Activated B cell treated with CpG ODN at 0.5 μM for 24 hours (primary cell): ENCODE measurements at regions of chr19 and their contacts with region 1.

Region 1: DNA sequence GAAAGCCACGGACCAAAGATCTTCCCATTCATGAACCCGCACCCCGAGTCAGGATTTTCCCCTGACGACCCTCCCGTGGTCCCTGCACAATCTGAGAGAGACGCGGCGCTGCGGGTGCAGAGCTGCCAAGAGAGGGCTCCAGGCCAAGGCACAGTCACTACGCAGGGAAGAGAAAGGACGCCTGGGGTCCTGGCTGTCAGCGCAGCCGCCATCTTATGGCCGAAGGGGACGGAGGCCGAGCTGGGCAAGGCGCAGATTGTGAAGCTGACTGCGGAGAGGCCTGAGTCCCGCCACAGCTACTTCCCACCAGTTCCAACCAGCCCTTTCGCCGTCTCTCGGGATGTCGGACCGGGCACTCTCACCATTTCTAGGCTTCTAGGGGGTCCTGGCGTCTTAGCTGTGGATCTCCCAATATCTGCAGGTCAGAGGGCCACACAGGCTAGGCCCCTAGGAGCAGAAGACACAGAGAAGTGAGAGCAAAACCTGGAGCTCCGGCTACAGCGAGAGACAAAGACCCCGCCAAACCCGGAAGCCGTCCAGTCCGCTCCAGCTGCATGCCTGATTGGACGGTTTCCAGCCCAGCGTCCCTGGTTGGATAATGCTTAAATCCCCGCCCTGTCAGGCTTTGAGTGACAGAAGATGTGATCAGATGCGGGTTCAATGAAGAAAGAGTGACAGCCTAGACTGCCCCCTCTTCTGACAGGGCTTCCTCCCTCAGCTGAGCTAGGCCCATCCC is at the start of gene ZNF100:
- DNase-seq: peak; percentile 70
- ATAC-seq: peak; percentile 98
- H3K4me3 Mint-ChIP-seq: peak within 1 kb of the TSS; percentile 95
- H3K27ac Mint-ChIP-seq: peak within 1 kb of the TSS; percentile 88
- H3K4me1 Mint-ChIP-seq: peaks cover 18% of the 10 kb centered on the region
- H3K27me3 Mint-ChIP-seq: no peaks in the 10 kb centered on the region
- CTCF ChIP-seq: no peak
- total RNA-seq, gene ZNF100: 21.1 and 22.4 TPM in 2 replicates

Region 2: GRCh38 chr19:21358768-21359451 is 408.3 kb before region 1 on chr19 and contains the start of gene ZNF738:
- CTCF ChIA-PET with region 1: no interaction called
- POLR2A ChIA-PET with region 1: interaction called, 4 read pairs
- intact Hi-C with region 1: loop called (anchors 5 kb)
- DNase-seq: peak; percentile 70
- ATAC-seq: peak; percentile 96
- H3K4me3 Mint-ChIP-seq: peak within 1 kb of the TSS; percentile 100
- H3K27ac Mint-ChIP-seq: peak within 1 kb of the TSS; percentile 96
- H3K4me1 Mint-ChIP-seq: peaks cover 13% of the 10 kb centered on the region
- H3K27me3 Mint-ChIP-seq: no peaks in the 10 kb centered on the region
- CTCF ChIP-seq: no peak
- total RNA-seq, gene ZNF738: 18.7 and 22.2 TPM in 2 replicates

Region 3: GRCh38 chr19:21680671-21681070 is 86.6 kb before region 1 on chr19:
- CTCF ChIA-PET with region 1: no interaction called
- POLR2A ChIA-PET with region 1: no interaction called
- intact Hi-C with region 1: no loop called
- DNase-seq: no peak
- ATAC-seq: no peak
- H3K4me3 Mint-ChIP-seq: no peak overlapping the region
- H3K27ac Mint-ChIP-seq: no peak overlapping the region
- H3K4me1 Mint-ChIP-seq: no peaks in the 10 kb centered on the region
- H3K27me3 Mint-ChIP-seq: no peaks in the 10 kb centered on the region
- CTCF ChIP-seq: no peak

Region 4: DNA sequence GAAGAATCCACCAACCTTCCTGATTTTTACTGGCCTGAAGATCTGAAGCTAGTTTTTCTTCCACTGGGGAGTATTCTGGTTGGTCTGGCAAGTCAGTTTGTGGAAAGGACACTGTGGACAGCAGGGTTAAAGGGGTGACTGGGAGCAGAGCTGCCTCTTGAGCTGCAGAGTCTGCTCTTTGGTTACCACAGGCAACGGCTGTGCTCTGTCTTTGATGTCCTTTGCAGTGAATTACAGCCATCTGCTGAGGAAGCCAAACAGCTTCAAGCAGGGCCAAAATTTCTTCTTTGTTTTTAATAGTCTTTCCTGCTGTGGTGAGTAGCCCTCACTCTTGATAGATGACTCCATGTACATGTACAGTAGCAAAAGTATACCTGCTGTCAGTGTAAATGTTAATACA is 75.6 kb before region 1 on chr19:
- CTCF ChIA-PET with region 1: no interaction called
- POLR2A ChIA-PET with region 1: no interaction called
- intact Hi-C with region 1: no loop called
- DNase-seq: no peak
- ATAC-seq: no peak
- H3K4me3 Mint-ChIP-seq: no peak overlapping the region
- H3K27ac Mint-ChIP-seq: no peak overlapping the region
- H3K4me1 Mint-ChIP-seq: no peaks in the 10 kb centered on the region
- H3K27me3 Mint-ChIP-seq: no peaks in the 10 kb centered on the region
- CTCF ChIP-seq: no peak

Region 5: DNA sequence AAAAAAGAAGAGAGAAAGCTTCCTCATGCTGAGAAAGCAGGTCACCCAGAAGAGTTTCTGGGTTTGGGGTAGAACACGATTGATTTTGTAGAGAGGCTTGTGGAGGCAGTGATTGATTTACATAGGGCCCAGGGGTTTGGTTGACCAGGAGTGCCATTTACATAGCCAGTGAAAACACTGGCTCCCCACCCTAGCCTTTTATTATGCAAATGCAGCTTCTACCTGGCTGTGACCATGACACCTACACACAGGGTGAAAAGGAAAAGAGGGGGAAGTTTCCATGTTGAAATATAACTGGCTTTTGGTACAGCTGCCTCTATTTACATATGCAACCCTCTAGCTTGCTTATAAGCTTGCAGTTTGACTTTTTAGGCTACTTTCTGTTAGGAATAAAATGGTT is 61.8 kb before region 1 on chr19:
- CTCF ChIA-PET with region 1: no interaction called
- POLR2A ChIA-PET with region 1: no interaction called
- intact Hi-C with region 1: no loop called
- DNase-seq: no peak
- ATAC-seq: no peak
- H3K4me3 Mint-ChIP-seq: no peak overlapping the region
- H3K27ac Mint-ChIP-seq: no peak overlapping the region
- H3K4me1 Mint-ChIP-seq: no peaks in the 10 kb centered on the region
- H3K27me3 Mint-ChIP-seq: no peaks in the 10 kb centered on the region
- CTCF ChIP-seq: no peak

Region 6: GRCh38 chr19:21835810-21836444 is 68.7 kb after region 1 on chr19 and contains the start of gene ZNF43:
- CTCF ChIA-PET with region 1: no interaction called
- POLR2A ChIA-PET with region 1: interaction called, 44 read pairs
- intact Hi-C with region 1: loop called (anchors 1 kb)
- DNase-seq: peak; percentile 77
- ATAC-seq: peak; percentile 98
- H3K4me3 Mint-ChIP-seq: peak within 1 kb of the TSS; percentile 100
- H3K27ac Mint-ChIP-seq: peak within 1 kb of the TSS; percentile 100
- H3K4me1 Mint-ChIP-seq: peaks cover 38% of the 10 kb centered on the region
- H3K27me3 Mint-ChIP-seq: no peaks in the 10 kb centered on the region
- CTCF ChIP-seq: no peak
- total RNA-seq, gene ZNF43: 41.8 and 52.4 TPM in 2 replicates

Region 7: GRCh38 chr19:21851596-21852345 is 84.5 kb after region 1 on chr19:
- CTCF ChIA-PET with region 1: interaction called, 3 read pairs
- POLR2A ChIA-PET with region 1: interaction called, 13 read pairs
- intact Hi-C with region 1: loop called (anchors 5 kb)
- DNase-seq: peak; percentile 79
- ATAC-seq: peak; percentile 99
- H3K4me3 Mint-ChIP-seq: peak overlapping the region; percentile 95
- H3K27ac Mint-ChIP-seq: peak overlapping the region; percentile 84
- H3K4me1 Mint-ChIP-seq: peaks cover 21% of the 10 kb centered on the region
- H3K27me3 Mint-ChIP-seq: no peaks in the 10 kb centered on the region
- CTCF ChIP-seq: no peak

Region 8: GRCh38 chr19:23273590-23274413 is 1506.6 kb after region 1 on chr19:
- CTCF ChIA-PET with region 1: no interaction called
- POLR2A ChIA-PET with region 1: no interaction called
- intact Hi-C with region 1: loop called (anchors 2 kb)
- DNase-seq: peak; percentile 89
- ATAC-seq: peak; percentile 98
- H3K4me3 Mint-ChIP-seq: peak overlapping the region; percentile 97
- H3K27ac Mint-ChIP-seq: peak overlapping the region; percentile 90
- H3K4me1 Mint-ChIP-seq: peaks cover 30% of the 10 kb centered on the region
- H3K27me3 Mint-ChIP-seq: no peaks in the 10 kb centered on the region
- CTCF ChIP-seq: no peak